ENCODE measurements at regions of chr1 and their contacts with region 1.

Region 1: GRCh38 chr1:51878616-51879336 is at the start of gene NRDC:
- DNase-seq: peak; percentile 99 to 100
- H3K4me3 ChIP-seq: peak within 1 kb of the TSS; percentile 80 to 90
- H3K27ac ChIP-seq: peak within 1 kb of the TSS; percentile 85
- H3K4me1 ChIP-seq: peaks cover 43% of the 10 kb centered on the region
- H3K27me3 ChIP-seq: no peaks in the 10 kb centered on the region
- CTCF ChIP-seq: no peak
- POLR2A ChIP-seq: peak in 1 of 2 donors; percentile 89
- total RNA-seq, gene NRDC: 94.3 TPM

Region 2: DNA sequence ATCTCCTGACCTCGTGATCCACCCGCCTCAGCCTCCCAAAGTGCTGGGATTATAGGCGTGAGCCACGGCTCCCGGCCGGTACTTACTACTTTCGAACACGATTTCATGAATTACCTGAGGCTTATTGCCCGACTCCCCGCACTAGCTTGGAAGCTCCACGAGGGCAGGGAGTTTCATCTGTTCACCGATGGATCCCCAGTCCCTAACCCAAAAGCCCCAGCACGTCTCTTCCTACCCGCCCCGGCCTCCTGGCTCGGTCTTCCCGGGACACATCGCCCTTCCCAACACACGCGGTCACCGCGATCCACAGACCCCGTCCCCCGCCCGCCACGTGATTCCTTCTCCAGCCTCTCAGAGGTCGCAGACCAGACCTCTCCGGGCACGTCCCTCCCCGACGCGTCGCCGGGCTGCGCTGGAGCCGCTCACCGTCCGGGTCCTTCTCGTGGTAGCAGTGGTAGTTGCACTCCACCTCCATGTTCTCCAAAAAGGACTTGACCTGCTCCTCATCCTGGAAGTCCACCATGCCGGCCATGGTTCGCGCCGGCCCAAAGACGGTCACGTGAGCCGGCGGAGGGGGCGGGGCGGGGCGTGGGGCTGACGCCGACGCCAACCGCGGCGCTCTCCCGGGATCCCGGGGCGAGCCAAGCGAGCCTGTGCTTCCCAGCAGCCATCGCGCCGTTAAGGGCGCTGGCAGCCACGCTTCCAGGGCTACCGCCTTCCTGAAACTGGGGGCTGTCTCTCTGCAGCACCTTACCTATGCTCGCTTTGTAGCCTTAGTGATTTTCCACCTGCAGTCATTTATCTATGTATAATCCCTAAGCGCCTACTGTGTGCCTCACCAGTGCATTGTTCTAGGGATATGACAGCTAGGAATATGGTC is 819.3 kb after region 1 on chr1 and contains the start of gene COA7:
- intact Hi-C with region 1: loop called (anchors 10 kb)
- DNase-seq: peak in 1 of 2 donors; percentile 90
- H3K4me3 ChIP-seq: peak within 1 kb of the TSS; percentile 74 to 92
- H3K27ac ChIP-seq: peak within 1 kb of the TSS; percentile 91
- H3K4me1 ChIP-seq: peaks cover 9% of the 10 kb centered on the region
- H3K27me3 ChIP-seq: no peaks in the 10 kb centered on the region
- CTCF ChIP-seq: peak in 1 of 3 experiments; percentile 2
- POLR2A ChIP-seq: no peak
- total RNA-seq, gene COA7: 9.8 TPM

Region 3: GRCh38 chr1:53196485-53197270 is 1317.9 kb after region 1 on chr1 and contains the start of gene CPT2:
- intact Hi-C with region 1: loop called (anchors 5 kb)
- DNase-seq: no peak
- H3K4me3 ChIP-seq: peak within 1 kb of the TSS; percentile 95 to 100
- H3K27ac ChIP-seq: peak within 1 kb of the TSS; percentile 99
- H3K4me1 ChIP-seq: peaks cover 40% of the 10 kb centered on the region
- H3K27me3 ChIP-seq: no peaks in the 10 kb centered on the region
- CTCF ChIP-seq: no peak
- POLR2A ChIP-seq: peak; percentile 86 to 97
- total RNA-seq, gene CPT2: 16.7 TPM

Measured in vagina (tissue), 2 donors.